ENCODE measurements at regions of chr20 and their contacts with region 1.

Region 1: GRCh38 chr20:19661717-19662636 is 96.1 kb upstream of the RIN2 start:
- DNase-seq: peak; percentile 67 to 77 (median 71)
- ATAC-seq: peak; percentile 74
- H3K4me3 ChIP-seq: no peak overlapping the region
- H3K27ac ChIP-seq: no peak overlapping the region
- H3K4me1 ChIP-seq: no peaks in the 10 kb centered on the region
- H3K27me3 ChIP-seq: no peaks in the 10 kb centered on the region
- CTCF ChIP-seq: peak; percentile 94 to 99 (median 96)
- POLR2A ChIP-seq: no peak

Region 2: DNA sequence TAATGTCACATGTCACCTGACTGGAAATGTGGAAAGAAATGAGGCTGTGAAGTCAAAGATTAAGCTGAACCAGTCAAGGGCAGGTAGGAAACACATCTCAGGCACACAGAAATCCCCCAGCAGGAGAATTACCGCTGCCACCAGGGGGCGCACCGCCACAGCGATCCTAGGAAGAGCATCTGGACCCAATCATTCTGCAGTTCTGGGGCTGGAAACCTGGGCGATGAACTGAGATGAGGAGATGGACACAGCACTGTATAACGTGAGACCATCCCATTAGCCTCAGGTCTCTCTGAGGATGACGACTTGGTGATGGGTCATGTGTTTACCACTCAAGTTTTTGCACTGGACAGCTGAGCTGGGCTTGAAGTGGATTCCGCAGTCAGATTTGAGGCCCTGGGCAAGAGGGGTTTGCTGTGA is 456.0 kb before region 1 on chr20:
- intact Hi-C with region 1: loop called (anchors 5 kb)
- DNase-seq: peak; percentile 55 to 76 (median 62)
- ATAC-seq: peak; percentile 63
- H3K4me3 ChIP-seq: no peak overlapping the region
- H3K27ac ChIP-seq: no peak overlapping the region
- H3K4me1 ChIP-seq: peaks cover 2% of the 10 kb centered on the region
- H3K27me3 ChIP-seq: peaks cover 0 to 2% of the 10 kb centered on the region in 2 donors
- CTCF ChIP-seq: peak; percentile 66 to 84 (median 75)
- POLR2A ChIP-seq: no peak

Region 3: GRCh38 chr20:19540392-19540791 is 121.6 kb before region 1 on chr20:
- intact Hi-C with region 1: no loop called
- DNase-seq: peak in 2 of 4 donors; percentile 8 to 34
- ATAC-seq: no peak
- H3K4me3 ChIP-seq: no peak overlapping the region
- H3K27ac ChIP-seq: no peak overlapping the region
- H3K4me1 ChIP-seq: no peaks in the 10 kb centered on the region
- H3K27me3 ChIP-seq: no peaks in the 10 kb centered on the region
- CTCF ChIP-seq: no peak
- POLR2A ChIP-seq: no peak